ENCODE measurements at regions of chr1 and their contacts with region 1.

Region 1: GRCh38 chr1:27097484-27097917 is 57.4 kb downstream of the SLC9A1 start:
- DNase-seq: peak; percentile 31 to 84 (median 61)
- ATAC-seq: peak; percentile 86 to 91 (median 89)
- H3K4me3 ChIP-seq: no peak overlapping the region
- H3K4me3 Mint-ChIP-seq: no peak overlapping the region
- H3K27ac ChIP-seq: no peak overlapping the region
- H3K27ac Mint-ChIP-seq: no peak overlapping the region
- H3K4me1 ChIP-seq: peaks cover 0 to 2% of the 10 kb centered on the region in 2 experiments
- H3K4me1 Mint-ChIP-seq: peaks cover 0 to 7% (median 2%) of the 10 kb centered on the region in 3 donors
- H3K27me3 ChIP-seq: no peaks in the 10 kb centered on the region
- H3K27me3 Mint-ChIP-seq: no peaks in the 10 kb centered on the region

Region 2: DNA sequence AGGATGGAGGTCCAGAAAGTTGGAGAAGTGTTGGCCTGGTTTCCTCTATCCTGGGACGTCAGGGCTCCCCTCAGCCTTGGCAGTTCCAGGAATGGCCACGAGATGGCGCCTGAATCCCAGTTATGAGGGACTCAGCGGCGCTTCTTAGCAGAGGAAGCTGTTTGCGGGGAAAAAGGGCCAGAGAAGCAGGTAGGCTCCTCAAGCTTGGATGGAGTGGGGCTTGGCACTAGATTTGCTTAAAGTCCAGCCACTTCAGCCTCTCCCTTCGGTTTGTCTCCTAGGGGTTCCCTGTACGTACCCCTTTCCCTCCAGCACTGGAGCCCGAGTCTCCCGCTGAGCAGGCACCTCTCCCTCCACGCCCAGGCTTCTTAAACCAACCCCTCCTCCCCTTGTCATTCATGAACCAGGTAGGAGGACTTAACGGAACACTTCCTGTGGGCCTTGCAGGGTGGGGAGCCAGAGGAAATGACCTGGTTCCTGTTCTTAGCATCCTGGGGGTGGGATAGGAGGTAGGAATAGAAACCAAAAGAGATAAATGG is 52.8 kb before region 1 on chr1:
- CTCF ChIA-PET with region 1: interaction called, 5 to 38 read pairs
- POLR2A ChIA-PET with region 1: no interaction called
- DNase-seq: peak; percentile 60 to 93 (median 84)
- ATAC-seq: peak; percentile 91 to 94 (median 92)
- H3K4me3 ChIP-seq: peak overlapping the region; percentile 24 to 38
- H3K4me3 Mint-ChIP-seq: peak overlapping the region; percentile 17 to 68 (median 46)
- H3K27ac ChIP-seq: no peak overlapping the region
- H3K27ac Mint-ChIP-seq: peak overlapping the region in 1 of 2 donors; percentile 64
- H3K4me1 ChIP-seq: peaks cover 8 to 19% of the 10 kb centered on the region in 2 experiments
- H3K4me1 Mint-ChIP-seq: peaks cover 16 to 23% (median 21%) of the 10 kb centered on the region in 3 donors
- H3K27me3 ChIP-seq: peaks cover 0 to 33% of the 10 kb centered on the region in 2 experiments
- H3K27me3 Mint-ChIP-seq: no peaks in the 10 kb centered on the region

Region 3: DNA sequence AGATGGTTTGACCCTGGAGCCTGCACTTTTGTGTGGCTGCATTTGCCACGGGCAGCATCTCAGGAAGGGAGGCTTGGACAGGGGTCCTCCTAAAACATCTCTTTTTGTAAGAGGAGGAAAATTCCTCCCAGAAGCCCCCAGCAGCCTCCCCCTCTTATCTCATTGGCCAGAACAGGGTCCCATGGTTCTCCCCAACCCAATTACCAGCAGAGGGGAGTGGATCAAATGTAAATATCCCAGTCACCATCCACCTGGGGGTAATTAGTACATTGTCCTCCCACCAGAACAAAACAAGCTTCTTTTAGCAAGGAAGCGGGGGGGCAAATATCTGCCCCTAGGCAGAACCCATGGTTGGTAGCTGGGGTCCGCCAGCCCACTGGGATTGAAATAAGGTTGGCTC is 40.1 kb before region 1 on chr1:
- CTCF ChIA-PET with region 1: interaction called in 1 of 2 experiments, 10 read pairs
- POLR2A ChIA-PET with region 1: no interaction called
- DNase-seq: no peak
- ATAC-seq: no peak
- H3K4me3 ChIP-seq: no peak overlapping the region
- H3K4me3 Mint-ChIP-seq: no peak overlapping the region
- H3K27ac ChIP-seq: no peak overlapping the region
- H3K27ac Mint-ChIP-seq: no peak overlapping the region
- H3K4me1 ChIP-seq: no peaks in the 10 kb centered on the region
- H3K4me1 Mint-ChIP-seq: no peaks in the 10 kb centered on the region
- H3K27me3 ChIP-seq: no peaks in the 10 kb centered on the region
- H3K27me3 Mint-ChIP-seq: no peaks in the 10 kb centered on the region

Region 4: DNA sequence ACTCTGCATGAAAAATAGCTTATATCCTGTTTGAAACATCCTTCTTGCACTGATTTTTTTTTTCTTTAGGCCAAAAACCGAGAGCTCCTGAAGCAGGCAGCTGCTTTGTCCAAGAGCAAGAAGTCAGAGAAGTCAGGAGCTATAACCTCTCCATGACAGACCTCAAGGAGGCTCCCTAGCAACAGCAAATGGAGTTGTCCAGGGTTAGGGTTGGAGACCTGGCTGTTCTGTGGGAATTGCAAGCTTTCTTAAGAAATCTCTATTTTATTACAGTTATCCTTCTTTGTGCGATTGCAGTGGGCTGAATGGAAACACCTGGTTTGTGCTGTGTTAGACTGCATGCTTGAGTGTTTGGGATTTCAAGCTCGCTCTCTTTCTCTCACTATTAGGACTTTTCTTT is 662.9 kb after region 1 on chr1:
- CTCF ChIA-PET with region 1: interaction called in 1 of 2 experiments, 10 read pairs
- POLR2A ChIA-PET with region 1: no interaction called
- DNase-seq: no peak
- ATAC-seq: no peak
- H3K4me3 ChIP-seq: no peak overlapping the region
- H3K4me3 Mint-ChIP-seq: no peak overlapping the region
- H3K27ac ChIP-seq: no peak overlapping the region
- H3K27ac Mint-ChIP-seq: no peak overlapping the region
- H3K4me1 ChIP-seq: no peaks in the 10 kb centered on the region
- H3K4me1 Mint-ChIP-seq: no peaks in the 10 kb centered on the region
- H3K27me3 ChIP-seq: no peaks in the 10 kb centered on the region
- H3K27me3 Mint-ChIP-seq: no peaks in the 10 kb centered on the region